IMR-90 (cell line): ENCODE measurements at regions of chr3 and their contacts with region 1.

Region 1: DNA sequence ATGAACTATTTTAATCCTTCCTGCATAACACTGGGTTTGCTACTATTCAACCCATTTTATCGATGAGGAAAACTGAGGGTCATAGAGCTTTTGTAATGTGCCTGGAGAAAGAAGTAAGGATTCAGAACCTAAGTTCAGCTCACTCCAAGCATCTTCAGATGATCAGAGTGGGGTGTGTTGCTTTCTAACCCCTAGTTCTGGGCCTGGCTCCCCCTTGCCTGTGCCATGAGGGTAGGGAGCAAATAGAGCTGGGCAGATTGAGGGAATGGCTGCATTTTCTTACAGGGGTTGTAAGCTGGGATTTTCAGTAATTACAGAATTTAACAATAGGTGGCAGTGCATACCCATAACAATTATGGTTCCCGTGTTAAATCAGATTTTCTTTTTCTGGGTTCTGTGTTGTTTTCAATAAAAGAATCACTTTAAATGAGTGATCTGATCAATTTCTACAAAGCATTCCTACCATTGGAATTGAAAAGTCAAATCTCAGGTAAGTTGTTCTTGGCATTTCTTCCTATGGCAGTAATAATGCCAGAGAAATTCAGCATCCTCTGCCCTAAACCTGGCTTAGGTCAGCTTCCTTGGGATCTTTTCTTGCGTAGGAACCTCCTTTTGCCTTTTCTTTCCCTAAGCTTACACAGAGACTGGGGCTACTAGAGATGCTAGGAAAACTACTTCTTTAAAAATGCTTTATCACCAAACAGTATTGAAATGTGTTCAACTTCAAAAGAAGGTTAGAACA is 103.8 kb upstream of the IL12A start:
- DNase-seq: peak; percentile 65
- ATAC-seq: peak; percentile 47
- H3K4me3 ChIP-seq: no peak overlapping the region
- H3K27ac ChIP-seq: peak overlapping the region; percentile 63
- H3K4me1 ChIP-seq: peaks cover 16% of the 10 kb centered on the region
- H3K27me3 ChIP-seq: no peaks in the 10 kb centered on the region
- CTCF ChIP-seq: peak; percentile 67
- POLR2A ChIP-seq: no peak
- RAD21 ChIP-seq: peak; percentile 70

Region 2: DNA sequence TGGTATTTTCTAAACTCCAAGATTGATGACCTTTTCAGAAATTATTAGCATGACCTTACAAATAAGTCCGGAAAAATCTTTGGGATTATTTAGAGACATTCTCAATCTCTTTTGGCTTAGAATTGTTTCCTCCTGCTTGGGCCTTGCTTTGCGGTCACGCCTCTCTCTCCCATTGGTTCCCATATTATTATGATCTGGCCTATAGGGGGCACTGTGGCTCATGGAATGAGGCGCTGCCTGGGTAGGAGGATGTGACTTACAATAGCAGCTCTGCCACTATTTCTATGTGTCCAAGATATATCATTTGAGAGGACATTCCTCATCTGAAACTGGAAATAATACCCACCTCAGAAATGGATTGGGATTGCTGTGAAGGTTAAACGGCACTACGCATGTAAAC is 618.1 kb before region 1 on chr3:
- CTCF ChIA-PET with region 1: no interaction called
- POLR2A ChIA-PET with region 1: no interaction called
- dilution Hi-C with region 1: no loop called
- in situ Hi-C with region 1: no loop called
- intact Hi-C with region 1: loop called (anchors 5 kb)
- DNase-seq: peak; percentile 6
- ATAC-seq: no peak
- H3K4me3 ChIP-seq: no peak overlapping the region
- H3K27ac ChIP-seq: no peak overlapping the region
- H3K4me1 ChIP-seq: no peaks in the 10 kb centered on the region
- H3K27me3 ChIP-seq: peaks cover 5% of the 10 kb centered on the region; the same call in 1 of the 2 replicates
- CTCF ChIP-seq: peak; percentile 43
- POLR2A ChIP-seq: no peak
- RAD21 ChIP-seq: peak; percentile 56

Region 3: GRCh38 chr3:159839561-159840379 is 45.1 kb before region 1 on chr3:
- CTCF ChIA-PET with region 1: interaction called, 6 read pairs
- POLR2A ChIA-PET with region 1: no interaction called
- dilution Hi-C with region 1: no loop called
- in situ Hi-C with region 1: no loop called
- intact Hi-C with region 1: loop called (anchors 5 kb)
- DNase-seq: no peak
- ATAC-seq: no peak
- H3K4me3 ChIP-seq: no peak within 1 kb of the TSS
- H3K27ac ChIP-seq: no peak within 1 kb of the TSS
- H3K4me1 ChIP-seq: peaks cover 26% of the 10 kb centered on the region
- H3K27me3 ChIP-seq: no peaks in the 10 kb centered on the region
- CTCF ChIP-seq: no peak
- POLR2A ChIP-seq: no peak
- RAD21 ChIP-seq: no peak

Region 4: DNA sequence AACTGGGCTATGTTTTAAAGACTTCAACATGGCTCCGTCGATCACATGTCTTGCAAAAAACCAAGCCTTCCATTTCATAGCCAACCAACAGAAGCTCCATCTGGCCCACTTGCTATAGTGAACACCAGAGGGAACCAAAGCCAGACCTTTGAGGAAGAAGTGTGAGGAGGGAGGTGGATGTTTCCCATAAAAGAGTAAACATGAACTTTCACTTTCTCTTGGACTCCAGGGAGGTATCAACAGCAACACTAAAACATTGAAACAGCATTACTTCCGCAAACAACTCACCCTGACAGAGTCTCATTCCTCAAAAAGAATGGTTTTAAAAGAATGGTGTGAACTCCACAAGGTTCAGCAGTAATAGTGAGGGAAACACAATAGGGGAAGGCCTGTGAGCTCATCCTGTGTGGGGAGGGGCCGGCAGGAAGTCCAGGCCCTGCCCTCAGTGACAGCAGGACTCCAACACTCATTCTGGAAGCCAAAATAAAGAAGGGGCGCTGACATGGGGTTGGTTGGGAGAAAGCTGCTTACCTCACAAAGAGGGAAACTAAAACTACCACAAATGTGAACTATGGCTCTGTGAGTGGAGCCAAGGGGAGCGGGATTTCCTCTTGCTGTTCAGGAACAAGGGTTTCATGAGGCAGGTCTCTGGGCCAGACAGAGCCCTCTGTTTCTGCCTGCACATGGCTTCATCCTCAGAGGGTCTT is 44.8 kb after region 1 on chr3:
- CTCF ChIA-PET with region 1: interaction called, 8 read pairs
- POLR2A ChIA-PET with region 1: interaction called, 3 read pairs
- dilution Hi-C with region 1: no loop called
- in situ Hi-C with region 1: no loop called
- intact Hi-C with region 1: loop called (anchors 2 kb)
- DNase-seq: peak; percentile 87
- ATAC-seq: peak; percentile 41
- H3K4me3 ChIP-seq: no peak overlapping the region
- H3K27ac ChIP-seq: peak overlapping the region; percentile 93
- H3K4me1 ChIP-seq: peaks cover 24% of the 10 kb centered on the region
- H3K27me3 ChIP-seq: no peaks in the 10 kb centered on the region
- CTCF ChIP-seq: peak; percentile 67
- POLR2A ChIP-seq: no peak
- RAD21 ChIP-seq: peak; percentile 72

Region 5: DNA sequence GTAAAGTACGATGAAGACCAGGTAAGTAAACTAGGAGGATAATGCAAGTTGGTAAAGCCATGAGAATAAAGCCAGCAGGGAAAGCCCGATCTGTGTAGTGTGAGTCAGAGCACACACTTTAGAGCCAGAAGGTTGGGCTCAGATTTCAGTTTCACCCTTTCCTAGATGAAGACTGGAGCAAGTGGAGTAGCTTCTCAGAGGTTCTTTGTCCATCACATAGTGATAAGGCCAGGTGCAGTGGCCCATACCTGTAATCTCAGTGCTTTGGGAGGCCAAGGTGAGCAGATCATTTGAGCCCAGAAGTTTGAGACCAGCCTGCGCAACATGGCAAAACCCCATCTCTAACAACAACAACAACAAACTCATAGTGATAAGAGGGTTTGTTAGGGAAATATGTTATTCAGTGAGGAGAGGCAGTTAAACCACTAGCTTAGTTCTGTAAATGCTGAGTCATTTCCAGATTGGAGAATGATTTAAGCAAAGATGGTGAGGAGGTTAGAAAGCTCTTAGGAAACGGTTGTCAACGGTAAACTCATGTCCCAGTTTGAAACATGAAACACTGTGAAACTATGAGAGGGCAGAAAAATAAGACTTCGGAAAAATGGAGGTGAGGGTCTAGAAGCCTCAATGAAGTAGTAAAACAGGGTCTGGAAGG is 142.8 kb after region 1 on chr3:
- CTCF ChIA-PET with region 1: interaction called, 11 read pairs
- POLR2A ChIA-PET with region 1: no interaction called
- dilution Hi-C with region 1: no loop called
- in situ Hi-C with region 1: no loop called
- intact Hi-C with region 1: no loop called
- DNase-seq: peak; percentile 88
- ATAC-seq: peak; percentile 79
- H3K4me3 ChIP-seq: no peak overlapping the region
- H3K27ac ChIP-seq: peak overlapping the region; percentile 93
- H3K4me1 ChIP-seq: peaks cover 14% of the 10 kb centered on the region
- H3K27me3 ChIP-seq: no peaks in the 10 kb centered on the region
- CTCF ChIP-seq: no peak
- POLR2A ChIP-seq: peak; percentile 53; the same call in 1 of the 2 replicates
- RAD21 ChIP-seq: no peak

Region 6: DNA sequence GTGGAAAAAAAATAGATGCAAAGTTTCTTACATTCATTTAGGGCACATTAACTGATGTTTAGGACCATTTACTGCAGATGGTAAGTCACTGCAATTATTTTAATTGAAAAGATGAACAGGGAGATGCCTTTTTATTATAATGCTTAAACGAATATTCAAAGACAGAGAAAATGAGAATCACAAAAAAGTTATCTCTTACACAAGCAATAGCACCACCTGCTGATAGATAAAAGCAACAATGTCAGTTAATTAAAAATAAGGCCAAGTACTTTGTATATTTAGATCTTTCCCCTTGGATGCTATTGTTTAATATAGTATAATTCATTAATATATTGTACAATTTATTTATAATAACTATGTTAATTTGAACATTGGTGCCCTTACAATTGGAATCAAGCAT is 458.3 kb after region 1 on chr3:
- CTCF ChIA-PET with region 1: no interaction called
- POLR2A ChIA-PET with region 1: interaction called, 3 read pairs
- dilution Hi-C with region 1: no loop called
- in situ Hi-C with region 1: no loop called
- intact Hi-C with region 1: loop called (anchors 1 kb)
- DNase-seq: peak; percentile 49
- ATAC-seq: peak; percentile 40
- H3K4me3 ChIP-seq: no peak overlapping the region
- H3K27ac ChIP-seq: no peak overlapping the region
- H3K4me1 ChIP-seq: peaks cover 2% of the 10 kb centered on the region; the same call in 1 of the 2 replicates
- H3K27me3 ChIP-seq: no peaks in the 10 kb centered on the region
- CTCF ChIP-seq: peak; percentile 71
- POLR2A ChIP-seq: no peak
- RAD21 ChIP-seq: peak; percentile 74

Region 7: DNA sequence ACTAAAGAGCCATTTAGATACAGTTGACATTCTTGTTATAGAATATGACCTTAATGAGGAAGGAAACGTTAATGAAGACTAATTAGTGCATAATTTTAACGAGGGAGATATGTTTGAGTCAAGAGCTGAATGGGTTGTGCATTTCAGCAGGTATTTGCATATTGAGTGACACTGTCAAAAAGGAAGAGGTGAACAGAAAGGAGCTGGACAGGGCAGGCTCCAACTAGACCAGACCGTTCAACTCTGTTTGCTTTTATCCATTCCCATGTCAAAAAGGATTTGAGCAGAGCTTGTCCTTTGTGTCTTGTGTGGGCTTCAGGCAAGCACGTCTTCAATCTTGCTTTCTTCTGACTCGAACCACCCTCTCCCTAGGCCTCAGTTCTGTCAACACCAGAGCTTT is 1179.6 kb after region 1 on chr3:
- CTCF ChIA-PET with region 1: no interaction called
- POLR2A ChIA-PET with region 1: no interaction called
- dilution Hi-C with region 1: no loop called
- in situ Hi-C with region 1: no loop called
- intact Hi-C with region 1: no loop called
- DNase-seq: no peak
- ATAC-seq: no peak
- H3K4me3 ChIP-seq: no peak overlapping the region
- H3K27ac ChIP-seq: no peak overlapping the region
- H3K4me1 ChIP-seq: no peaks in the 10 kb centered on the region
- H3K27me3 ChIP-seq: no peaks in the 10 kb centered on the region
- CTCF ChIP-seq: no peak
- POLR2A ChIP-seq: no peak
- RAD21 ChIP-seq: no peak